Activated T-helper 1 cell treated with anti-CD3 and anti-CD28 coated beads, Interleukin-12 subunit alpha, Interleukin-12 subunit beta, Interleukin-2, Interleukin-4 antibody, amounts not matched to agents 30 ng/mL and 10 ng/mL and 1 ng/mL, durations not matched to agents 14 hours and 24 hours and 36 hours (primary cell): ENCODE measurements at regions of chr16 and their contacts with region 1.

Region 1: GRCh38 chr16:30335598-30336474 is 19.3 kb downstream of the CD2BP2 start:
- DNase-seq: no peak
- H3K4me3 Mint-ChIP-seq: peak overlapping the region; percentile 86
- H3K27ac Mint-ChIP-seq: peak overlapping the region; percentile 85
- H3K4me1 Mint-ChIP-seq: peaks cover 16% of the 10 kb centered on the region
- H3K27me3 Mint-ChIP-seq: no peaks in the 10 kb centered on the region

Region 2: GRCh38 chr16:30355144-30355894 is 19.5 kb after region 1 on chr16 and contains the start of gene CD2BP2:
- intact Hi-C with region 1: loop called (anchors 1 kb)
- DNase-seq: peak; percentile 87
- H3K4me3 Mint-ChIP-seq: peak within 1 kb of the TSS; percentile 91
- H3K27ac Mint-ChIP-seq: peak within 1 kb of the TSS; percentile 88
- H3K4me1 Mint-ChIP-seq: peaks cover 46% of the 10 kb centered on the region
- H3K27me3 Mint-ChIP-seq: no peaks in the 10 kb centered on the region
- total RNA-seq, gene CD2BP2: 100 and 104 TPM in 2 replicates

Region 3: DNA sequence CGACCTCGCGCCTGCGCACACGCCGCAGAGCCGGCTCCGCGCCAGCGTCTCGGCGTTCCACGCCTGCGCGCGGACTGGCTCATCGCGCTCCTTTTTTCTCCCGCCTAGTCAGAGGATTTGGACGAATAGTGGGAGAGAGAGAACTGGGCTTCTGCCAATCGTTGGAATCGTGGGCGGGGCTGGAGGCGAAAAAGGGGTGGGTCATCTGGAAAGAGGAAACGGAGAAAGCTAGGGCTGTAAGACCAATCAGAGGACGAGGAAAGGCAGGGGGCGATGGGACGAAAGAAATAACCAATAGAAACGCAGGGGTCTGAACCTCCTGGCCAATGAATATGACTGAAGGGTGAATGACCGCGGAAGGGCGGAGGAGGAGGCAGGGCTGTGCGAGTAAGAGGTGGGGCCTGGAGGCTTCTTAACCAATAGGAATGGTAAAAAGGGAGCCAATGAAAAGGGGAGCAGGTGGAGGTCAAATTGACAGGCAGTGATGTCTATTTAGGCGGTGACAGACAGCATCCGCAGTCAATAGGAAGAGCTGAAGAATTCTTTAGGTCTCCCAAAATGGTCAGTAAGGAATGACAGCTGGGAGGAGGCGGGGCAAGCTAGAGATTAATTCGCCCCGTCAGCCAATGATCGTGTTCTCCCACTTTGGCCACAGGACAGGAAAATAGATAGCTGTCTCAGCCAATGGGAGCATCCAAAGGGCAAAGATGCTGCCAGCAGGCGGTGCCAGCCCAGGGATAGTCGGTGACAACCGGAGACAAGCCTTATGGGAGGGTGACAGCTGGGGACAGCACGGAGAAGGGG is 34.8 kb after region 1 on chr16 and contains the start of gene TBC1D10B:
- intact Hi-C with region 1: loop called (anchors 2 kb)
- DNase-seq: peak; percentile 99
- H3K4me3 Mint-ChIP-seq: peak within 1 kb of the TSS; percentile 94
- H3K27ac Mint-ChIP-seq: peak within 1 kb of the TSS; percentile 89
- H3K4me1 Mint-ChIP-seq: peaks cover 41% of the 10 kb centered on the region
- H3K27me3 Mint-ChIP-seq: no peaks in the 10 kb centered on the region
- total RNA-seq, gene TBC1D10B: 68.9 and 73.6 TPM in 2 replicates

Region 4: GRCh38 chr16:30378236-30379204 is 42.7 kb after region 1 on chr16:
- intact Hi-C with region 1: loop called (anchors 2 kb)
- DNase-seq: peak; percentile 98
- H3K4me3 Mint-ChIP-seq: peak overlapping the region; percentile 97
- H3K27ac Mint-ChIP-seq: peak overlapping the region; percentile 100
- H3K4me1 Mint-ChIP-seq: peaks cover 55% of the 10 kb centered on the region
- H3K27me3 Mint-ChIP-seq: peaks cover 2% of the 10 kb centered on the region

Region 5: GRCh38 chr16:30395155-30395991 is 59.5 kb after region 1 on chr16 and contains the start of gene ZNF48:
- intact Hi-C with region 1: no loop called
- DNase-seq: peak; percentile 53
- H3K4me3 Mint-ChIP-seq: peak within 1 kb of the TSS; percentile 90
- H3K27ac Mint-ChIP-seq: peak within 1 kb of the TSS; percentile 80
- H3K4me1 Mint-ChIP-seq: peaks cover 41% of the 10 kb centered on the region
- H3K27me3 Mint-ChIP-seq: no peaks in the 10 kb centered on the region
- total RNA-seq, gene ZNF48: 20.2 and 21.4 TPM in 2 replicates